Endothelial cell of umbilical vein (primary cell): ENCODE measurements at regions of chr4 and their contacts with region 1.

Region 1: DNA sequence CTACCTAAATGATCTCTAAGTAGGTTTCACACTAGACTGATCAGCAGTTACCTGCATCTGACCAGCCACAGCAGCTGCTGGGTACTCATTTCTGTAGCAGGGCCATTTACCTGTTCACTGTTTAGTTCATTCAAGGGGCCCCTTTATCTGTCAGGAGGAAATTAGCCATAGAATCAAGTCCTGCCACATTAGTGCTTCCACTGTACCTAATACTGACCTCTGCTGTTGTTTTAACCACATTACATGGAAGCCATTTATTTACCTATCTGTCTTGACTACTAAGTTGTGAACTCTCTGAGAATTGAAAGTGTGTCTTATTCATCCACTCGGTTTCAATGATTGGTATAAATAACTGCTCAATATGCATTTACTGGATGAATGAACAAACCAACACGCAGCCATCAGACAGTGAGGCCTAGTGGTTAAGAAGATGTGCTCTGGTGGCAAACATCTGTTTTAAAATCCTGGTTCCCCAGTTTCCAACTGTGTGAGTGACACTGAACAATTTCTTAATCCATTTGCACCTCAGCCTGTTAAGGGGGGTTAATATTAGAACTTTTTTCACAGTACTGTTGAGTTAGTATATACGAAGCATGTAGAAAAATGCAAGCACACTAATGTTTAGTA is 30.0 kb upstream of the ANXA5 start:
- DNase-seq: peak; percentile 79
- H3K4me3 ChIP-seq: no peak overlapping the region
- H3K27ac ChIP-seq: no peak overlapping the region
- H3K4me1 ChIP-seq: peaks cover 10% of the 10 kb centered on the region
- H3K27me3 ChIP-seq: no peaks in the 10 kb centered on the region
- CTCF ChIP-seq: peak; percentile 55 to 58
- POLR2A ChIP-seq: no peak

Region 2: DNA sequence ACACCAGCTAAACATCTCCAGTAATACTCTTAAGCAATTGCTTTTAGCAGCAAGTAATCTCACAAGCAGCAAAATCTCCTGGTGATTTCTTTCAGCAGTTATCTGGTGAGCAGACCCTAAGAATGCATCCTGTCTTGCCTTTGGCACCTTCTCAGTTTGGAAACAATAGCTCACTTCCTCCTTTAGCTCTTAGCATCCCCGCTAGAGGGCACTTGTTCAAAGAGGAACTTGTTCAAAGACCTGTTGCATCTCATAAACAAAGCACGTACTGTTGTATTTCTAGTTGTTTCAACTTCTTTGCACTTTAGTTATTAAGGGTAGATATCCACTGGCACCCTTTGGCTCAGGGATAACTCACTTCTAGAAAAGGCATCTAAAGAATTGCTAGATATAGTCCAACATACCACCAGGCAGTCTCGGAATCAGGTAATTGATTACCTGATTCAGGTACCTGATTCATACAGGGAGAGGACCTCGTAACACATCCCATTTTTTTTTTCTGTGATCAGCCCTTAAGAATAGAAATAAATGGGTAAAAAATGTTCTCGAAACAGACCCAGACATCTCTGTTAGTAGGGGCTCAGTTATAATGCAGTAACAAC is 264.0 kb before region 1 on chr4:
- CTCF ChIA-PET with region 1: interaction called, 15 read pairs
- POLR2A ChIA-PET with region 1: no interaction called
- dilution Hi-C with region 1: no loop called
- intact Hi-C with region 1: no loop called
- DNase-seq: peak; percentile 78
- H3K4me3 ChIP-seq: no peak overlapping the region
- H3K27ac ChIP-seq: no peak overlapping the region
- H3K4me1 ChIP-seq: no peaks in the 10 kb centered on the region
- H3K27me3 ChIP-seq: peaks cover 0 to 9% of the 10 kb centered on the region in 2 experiments
- CTCF ChIP-seq: peak; percentile 63 to 67
- POLR2A ChIP-seq: no peak

Region 3: GRCh38 chr4:121484633-121485032 is 242.1 kb before region 1 on chr4:
- CTCF ChIA-PET with region 1: interaction called, 6 read pairs
- POLR2A ChIA-PET with region 1: no interaction called
- dilution Hi-C with region 1: loop called (anchors 25 kb)
- intact Hi-C with region 1: loop called (anchors 1 kb)
- DNase-seq: peak; percentile 47
- H3K4me3 ChIP-seq: no peak overlapping the region
- H3K27ac ChIP-seq: no peak overlapping the region
- H3K4me1 ChIP-seq: no peaks in the 10 kb centered on the region
- H3K27me3 ChIP-seq: peaks cover 0 to 17% of the 10 kb centered on the region in 2 experiments
- CTCF ChIP-seq: peak; percentile 68 to 78
- POLR2A ChIP-seq: no peak

Region 4: GRCh38 chr4:121675715-121676114 is 51.0 kb before region 1 on chr4:
- CTCF ChIA-PET with region 1: no interaction called
- POLR2A ChIA-PET with region 1: no interaction called
- dilution Hi-C with region 1: no loop called
- intact Hi-C with region 1: loop called (anchors 10 kb)
- DNase-seq: no peak
- H3K4me3 ChIP-seq: no peak overlapping the region
- H3K27ac ChIP-seq: no peak overlapping the region
- H3K4me1 ChIP-seq: no peaks in the 10 kb centered on the region
- H3K27me3 ChIP-seq: no peaks in the 10 kb centered on the region
- CTCF ChIP-seq: no peak
- POLR2A ChIP-seq: no peak

Region 5: GRCh38 chr4:121696581-121697461 is 29.9 kb before region 1 on chr4 and contains the start of gene ANXA5:
- CTCF ChIA-PET with region 1: interaction called, 23 read pairs
- POLR2A ChIA-PET with region 1: interaction called, 5 read pairs
- dilution Hi-C with region 1: no loop called
- intact Hi-C with region 1: loop called (anchors 1 kb)
- DNase-seq: peak; percentile 88
- H3K4me3 ChIP-seq: peak within 1 kb of the TSS; percentile 53 to 86 (median 70)
- H3K27ac ChIP-seq: peak within 1 kb of the TSS; percentile 97
- H3K4me1 ChIP-seq: peaks cover 33% of the 10 kb centered on the region
- H3K27me3 ChIP-seq: no peaks in the 10 kb centered on the region
- CTCF ChIP-seq: peak; percentile 41 to 49
- POLR2A ChIP-seq: peak; percentile 93
- total RNA-seq, gene ANXA5: 528 and 529 TPM in 2 replicates

Region 6: DNA sequence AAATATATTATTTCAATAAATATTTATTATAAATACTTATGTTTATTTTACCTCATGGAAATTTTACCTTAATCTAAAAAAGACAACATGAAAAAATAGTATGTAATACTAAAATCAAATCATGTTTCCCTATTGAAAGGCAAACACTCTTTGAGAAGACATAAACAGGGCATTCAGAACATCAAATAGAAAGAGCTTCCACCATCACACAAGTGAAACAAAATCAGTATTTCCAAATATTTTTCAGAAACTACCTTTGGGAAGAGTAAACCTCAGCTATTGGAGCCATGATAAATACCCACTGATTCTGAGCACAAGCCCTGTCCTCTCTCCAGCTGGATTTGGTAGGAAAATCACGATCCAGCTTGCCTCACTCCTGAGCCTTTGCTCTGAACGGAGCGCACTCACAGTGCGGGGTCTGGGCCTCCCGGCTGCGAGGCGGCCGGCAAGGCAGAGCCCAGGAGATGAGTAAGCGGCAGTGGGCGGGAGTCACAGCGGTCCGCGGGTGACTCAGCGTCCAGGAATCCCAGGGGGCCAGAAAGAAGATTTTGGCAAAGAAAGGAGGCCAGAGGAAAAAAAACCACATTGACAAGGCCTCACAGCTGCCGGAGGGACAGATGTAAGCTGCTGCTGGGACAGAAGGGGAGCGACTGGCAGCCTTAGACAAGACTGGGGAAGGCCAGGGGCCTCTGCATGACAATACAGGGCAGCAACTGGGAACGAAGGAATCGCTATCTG is 15.3 kb before region 1 on chr4:
- CTCF ChIA-PET with region 1: interaction called, 15 read pairs
- POLR2A ChIA-PET with region 1: interaction called, 3 read pairs
- dilution Hi-C with region 1: no loop called
- intact Hi-C with region 1: loop called (anchors 1 kb)
- DNase-seq: peak; percentile 90
- H3K4me3 ChIP-seq: peak overlapping the region in 1 of 3 experiments; percentile 76
- H3K27ac ChIP-seq: peak overlapping the region; percentile 98
- H3K4me1 ChIP-seq: peaks cover 27% of the 10 kb centered on the region
- H3K27me3 ChIP-seq: no peaks in the 10 kb centered on the region
- CTCF ChIP-seq: no peak
- POLR2A ChIP-seq: peak; percentile 87